ENCODE measurements at regions of chr2 and their contacts with region 1.

Region 1: DNA sequence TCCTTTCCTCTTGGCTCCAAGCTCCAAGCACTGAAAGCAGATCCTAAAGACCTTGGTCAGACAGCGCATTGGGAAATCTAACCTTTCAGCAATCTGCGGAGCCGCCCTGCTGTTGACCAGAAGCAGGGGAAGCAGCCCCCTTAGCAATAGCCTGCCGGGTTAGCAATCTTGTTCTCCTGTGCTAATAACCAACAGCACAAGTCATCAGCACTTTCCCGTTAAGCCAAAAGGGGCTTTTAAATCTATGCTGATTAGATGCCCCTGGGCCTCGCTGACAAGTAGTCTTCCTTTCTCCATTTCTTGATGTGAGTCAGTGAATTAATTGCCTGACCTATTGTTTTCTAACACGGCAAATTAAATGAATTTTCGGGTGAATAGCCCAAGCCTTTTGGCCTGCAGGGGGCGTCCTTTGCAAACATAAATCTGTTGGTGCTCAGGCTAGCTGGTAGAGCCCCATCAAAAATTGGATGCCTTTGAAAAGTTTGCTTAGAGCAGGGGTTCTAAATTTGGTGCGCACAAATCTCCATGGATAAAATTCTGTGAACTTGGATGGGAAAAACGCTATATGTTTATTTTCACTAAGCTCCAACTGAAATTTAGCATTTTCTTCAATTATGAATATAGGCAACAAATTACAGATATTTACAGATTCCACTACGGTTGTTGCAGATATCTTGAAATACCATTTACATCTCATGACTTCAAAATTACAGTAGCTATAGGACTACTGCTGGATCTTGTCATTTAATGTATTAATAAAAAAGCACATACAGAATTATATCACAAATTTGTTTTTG is 24.6 kb downstream of the MAIP1 start:
- DNase-seq: peak; percentile 51
- ATAC-seq: no peak
- H3K4me3 Mint-ChIP-seq: no peak overlapping the region
- H3K27ac Mint-ChIP-seq: no peak overlapping the region
- H3K4me1 Mint-ChIP-seq: peaks cover 3% of the 10 kb centered on the region
- H3K27me3 Mint-ChIP-seq: no peaks in the 10 kb centered on the region
- CTCF ChIP-seq: peak; percentile 60

Region 2: DNA sequence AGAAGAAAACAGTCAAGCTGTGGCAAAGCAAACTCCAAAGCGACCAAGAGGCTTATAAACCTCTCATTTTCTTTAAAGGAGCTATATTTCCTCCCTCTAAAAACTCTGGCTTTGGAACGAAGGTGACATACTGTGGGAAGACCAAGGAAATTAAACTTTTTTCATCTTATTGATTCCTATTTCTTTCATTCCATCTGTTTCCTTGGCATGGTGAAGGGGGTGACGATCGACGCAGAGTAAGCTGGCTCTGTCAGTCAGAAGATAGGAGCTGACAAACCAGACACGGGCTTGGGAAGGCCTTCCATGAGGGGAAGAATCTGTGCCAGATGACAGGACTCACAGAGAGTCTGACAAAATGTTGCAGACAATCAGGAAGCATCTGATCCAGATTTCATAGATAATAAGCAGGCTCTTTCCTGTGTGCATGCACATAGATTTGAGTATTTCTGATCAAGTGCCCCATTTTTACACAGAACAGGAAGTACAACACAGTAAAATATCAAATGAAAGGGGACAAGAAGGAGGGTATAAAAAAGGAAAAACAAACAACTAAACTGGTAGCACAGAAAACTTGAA is 784.0 kb before region 1 on chr2:
- CTCF ChIA-PET with region 1: no interaction called
- POLR2A ChIA-PET with region 1: no interaction called
- intact Hi-C with region 1: no loop called
- DNase-seq: no peak
- ATAC-seq: no peak
- H3K4me3 Mint-ChIP-seq: no peak overlapping the region
- H3K27ac Mint-ChIP-seq: no peak overlapping the region
- H3K4me1 Mint-ChIP-seq: no peaks in the 10 kb centered on the region
- H3K27me3 Mint-ChIP-seq: no peaks in the 10 kb centered on the region
- CTCF ChIP-seq: no peak

Region 3: GRCh38 chr2:200319548-200320337 is 339.7 kb after region 1 on chr2:
- CTCF ChIA-PET with region 1: no interaction called
- POLR2A ChIA-PET with region 1: interaction called, 14 read pairs
- intact Hi-C with region 1: no loop called
- DNase-seq: no peak
- ATAC-seq: no peak
- H3K4me3 Mint-ChIP-seq: no peak overlapping the region
- H3K27ac Mint-ChIP-seq: no peak overlapping the region
- H3K4me1 Mint-ChIP-seq: no peaks in the 10 kb centered on the region
- H3K27me3 Mint-ChIP-seq: no peaks in the 10 kb centered on the region
- CTCF ChIP-seq: no peak

Region 4: GRCh38 chr2:200483729-200484198 is 503.7 kb after region 1 on chr2:
- CTCF ChIA-PET with region 1: interaction called, 13 read pairs
- POLR2A ChIA-PET with region 1: no interaction called
- intact Hi-C with region 1: loop called (anchors 1 kb)
- DNase-seq: no peak
- ATAC-seq: no peak
- H3K4me3 Mint-ChIP-seq: no peak overlapping the region
- H3K27ac Mint-ChIP-seq: no peak overlapping the region
- H3K4me1 Mint-ChIP-seq: no peaks in the 10 kb centered on the region
- H3K27me3 Mint-ChIP-seq: peaks cover 8% of the 10 kb centered on the region
- CTCF ChIP-seq: no peak

Region 5: GRCh38 chr2:200578778-200579177 is 598.7 kb after region 1 on chr2:
- CTCF ChIA-PET with region 1: no interaction called
- POLR2A ChIA-PET with region 1: no interaction called
- intact Hi-C with region 1: loop called (anchors 5 kb)
- DNase-seq: no peak
- ATAC-seq: peak; percentile 42
- H3K4me3 Mint-ChIP-seq: no peak overlapping the region
- H3K27ac Mint-ChIP-seq: no peak overlapping the region
- H3K4me1 Mint-ChIP-seq: no peaks in the 10 kb centered on the region
- H3K27me3 Mint-ChIP-seq: peaks cover 2% of the 10 kb centered on the region
- CTCF ChIP-seq: no peak

Region 6: DNA sequence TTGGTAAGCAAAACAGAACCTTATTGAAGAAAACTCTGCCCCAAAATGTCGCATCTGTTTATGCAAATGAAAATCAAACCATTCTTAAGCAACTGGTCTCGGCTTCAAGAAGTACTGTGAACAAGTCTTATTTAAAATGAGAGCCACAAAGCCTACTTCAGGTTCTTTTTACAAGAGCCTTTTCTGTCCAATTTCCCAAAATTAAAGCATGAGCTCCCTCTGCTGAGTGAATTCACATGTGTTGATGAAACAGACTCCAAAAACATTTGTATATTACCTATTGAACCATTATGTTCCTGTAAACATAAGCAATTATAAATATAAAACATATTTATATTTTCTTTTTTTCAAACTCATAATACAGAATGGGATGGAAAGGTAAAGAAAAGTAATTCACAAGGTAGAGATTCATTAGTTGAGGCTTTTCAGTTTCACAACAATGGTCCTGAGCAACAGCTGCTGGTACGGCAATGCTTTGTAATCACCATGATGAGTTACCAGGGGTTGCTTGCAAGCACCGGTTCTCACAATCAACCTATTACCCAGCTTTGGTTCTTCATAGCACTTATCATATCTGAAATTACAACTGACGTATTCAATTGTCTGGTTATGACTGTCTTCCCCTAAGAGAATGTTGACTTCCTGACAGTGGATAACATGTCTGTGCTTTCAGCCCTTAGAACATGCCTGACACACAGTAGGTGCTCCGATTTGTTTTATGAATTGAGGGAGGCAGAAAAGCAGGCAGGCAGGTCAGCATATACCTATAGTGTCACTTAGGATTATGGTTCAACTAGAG is 723.3 kb after region 1 on chr2:
- CTCF ChIA-PET with region 1: interaction called, 3 read pairs
- POLR2A ChIA-PET with region 1: no interaction called
- intact Hi-C with region 1: loop called (anchors 1 kb)
- DNase-seq: no peak
- ATAC-seq: no peak
- H3K4me3 Mint-ChIP-seq: no peak overlapping the region
- H3K27ac Mint-ChIP-seq: no peak overlapping the region
- H3K4me1 Mint-ChIP-seq: peaks cover 5% of the 10 kb centered on the region
- H3K27me3 Mint-ChIP-seq: peaks cover 13% of the 10 kb centered on the region
- CTCF ChIP-seq: no peak